ENCODE measurements at regions of chr1 and their contacts with region 1.

Region 1: DNA sequence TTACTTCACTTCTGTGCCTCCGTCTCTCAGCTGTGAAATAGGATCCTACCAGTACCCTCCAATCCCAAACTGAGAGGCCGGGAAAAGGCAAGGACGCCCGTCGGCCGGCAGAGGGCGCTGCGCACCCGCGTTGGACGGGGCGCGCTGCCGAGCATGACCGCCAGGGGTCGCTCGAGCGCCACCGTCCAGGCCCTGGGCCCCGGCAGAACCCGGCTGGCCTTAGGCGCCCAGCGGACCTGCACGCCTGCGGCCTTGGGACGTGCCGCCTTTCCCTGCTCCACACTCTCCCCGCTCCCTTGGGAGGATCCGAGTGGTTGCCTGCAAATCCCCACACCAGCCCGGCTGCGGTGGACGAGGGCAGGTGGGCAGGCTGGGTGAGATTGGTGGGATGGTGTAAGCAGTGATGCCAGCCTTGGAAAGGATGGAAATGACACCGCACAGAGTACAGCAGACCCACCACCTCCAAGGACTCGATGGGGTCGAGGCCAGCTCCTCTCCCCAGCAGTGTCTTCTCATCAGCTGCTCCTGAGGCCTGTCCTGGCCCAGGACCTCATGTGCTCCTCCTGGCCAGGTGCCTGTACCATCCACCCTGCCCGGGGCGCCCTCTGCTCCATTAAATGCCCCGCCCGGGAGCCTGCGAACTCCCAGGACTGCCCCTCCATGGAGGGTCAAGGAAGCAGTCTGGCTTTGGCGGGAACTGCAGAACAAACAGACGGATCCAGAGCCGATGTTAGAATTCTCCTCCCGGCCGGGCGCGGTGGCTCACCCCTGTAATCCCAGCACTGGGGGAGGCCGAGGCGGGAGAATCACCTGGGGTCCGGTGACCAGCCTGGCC is 47.4 kb upstream of the LBR start:
- DNase-seq: peak; percentile 81 to 89
- ATAC-seq: peak; percentile 94
- H3K4me3 ChIP-seq: no peak overlapping the region
- H3K27ac ChIP-seq: no peak overlapping the region
- H3K4me1 ChIP-seq: no peaks in the 10 kb centered on the region
- H3K27me3 ChIP-seq: no peaks in the 10 kb centered on the region

Region 2: DNA sequence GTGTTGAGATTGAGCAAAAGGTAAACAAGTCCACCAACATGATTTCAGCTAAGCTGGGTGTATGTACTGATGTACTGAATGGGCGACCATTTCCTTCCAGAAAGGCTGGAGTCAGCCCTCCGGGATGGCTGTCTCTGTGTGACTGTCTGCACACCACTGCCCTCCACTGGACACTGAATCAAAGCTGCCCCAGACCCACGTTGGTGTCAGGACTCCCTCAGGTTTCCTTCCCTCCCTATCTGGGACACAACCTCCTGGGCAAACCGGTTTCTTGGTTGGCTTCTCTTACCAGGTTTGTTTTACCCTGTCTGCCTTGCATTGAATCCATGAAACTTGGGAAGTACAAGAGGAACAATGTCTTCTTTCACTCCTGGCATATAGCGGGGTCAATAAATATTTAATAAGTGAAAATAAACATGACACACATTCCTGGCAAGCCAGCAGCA is 297.1 kb after region 1 on chr1:
- intact Hi-C with region 1: loop called (anchors 2 to 5 kb)
- DNase-seq: peak; percentile 87 to 91
- ATAC-seq: peak; percentile 88
- H3K4me3 ChIP-seq: no peak overlapping the region
- H3K27ac ChIP-seq: no peak overlapping the region
- H3K4me1 ChIP-seq: peaks cover 0 to 2% of the 10 kb centered on the region in 2 donors
- H3K27me3 ChIP-seq: no peaks in the 10 kb centered on the region

Region 3: DNA sequence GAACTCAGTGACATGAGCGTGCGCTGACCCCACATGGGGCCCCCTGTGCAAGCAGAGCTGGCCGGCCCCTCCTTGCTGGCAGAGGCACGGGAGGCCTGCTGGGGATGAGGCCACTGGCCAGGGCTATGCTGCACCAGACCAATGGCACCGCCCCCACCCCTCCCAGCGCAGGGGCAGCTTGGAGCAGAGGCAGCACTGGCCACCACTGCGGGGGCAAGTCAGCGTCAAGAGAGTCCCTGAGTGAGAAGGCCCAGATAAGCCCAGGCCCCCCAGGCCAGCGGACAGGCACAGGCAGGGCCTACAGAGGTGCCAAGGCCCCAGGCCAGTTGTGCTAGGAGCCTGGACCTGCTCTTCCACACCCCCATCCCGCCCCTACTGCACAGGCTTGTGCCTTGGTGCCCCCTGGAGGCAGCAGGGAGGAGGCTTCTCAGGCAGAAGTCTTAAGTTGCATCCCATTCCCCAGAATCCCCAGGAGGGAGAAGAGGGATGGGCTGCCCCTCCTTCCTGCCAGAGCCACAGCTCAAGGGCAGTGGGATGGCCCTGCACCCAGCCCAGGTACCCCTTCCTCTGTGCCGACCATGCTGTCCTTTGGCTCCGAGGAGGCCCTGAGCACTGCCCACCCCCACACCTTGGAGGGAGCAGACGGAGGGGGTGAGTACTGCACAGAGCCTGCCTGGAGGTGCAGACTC is 370.5 kb after region 1 on chr1:
- intact Hi-C with region 1: loop called (anchors 2 kb)
- DNase-seq: peak; percentile 86 to 92
- ATAC-seq: peak; percentile 89
- H3K4me3 ChIP-seq: no peak overlapping the region
- H3K27ac ChIP-seq: peak overlapping the region in 1 of 2 donors; percentile 0
- H3K4me1 ChIP-seq: no peaks in the 10 kb centered on the region
- H3K27me3 ChIP-seq: no peaks in the 10 kb centered on the region

Region 4: GRCh38 chr1:225911191-225912130 is 436.3 kb after region 1 on chr1:
- intact Hi-C with region 1: loop called (anchors 2 kb)
- DNase-seq: peak; percentile 72 to 92
- ATAC-seq: peak; percentile 90
- H3K4me3 ChIP-seq: no peak overlapping the region
- H3K27ac ChIP-seq: no peak overlapping the region
- H3K4me1 ChIP-seq: no peaks in the 10 kb centered on the region
- H3K27me3 ChIP-seq: no peaks in the 10 kb centered on the region

Region 5: GRCh38 chr1:225977937-225978748 is 502.9 kb after region 1 on chr1:
- intact Hi-C with region 1: loop called (anchors 1 to 5 kb)
- DNase-seq: no peak
- ATAC-seq: no peak
- H3K4me3 ChIP-seq: no peak overlapping the region
- H3K27ac ChIP-seq: no peak overlapping the region
- H3K4me1 ChIP-seq: no peaks in the 10 kb centered on the region
- H3K27me3 ChIP-seq: no peaks in the 10 kb centered on the region